ENCODE measurements at regions of chr20 and their contacts with region 1.

Region 1: DNA sequence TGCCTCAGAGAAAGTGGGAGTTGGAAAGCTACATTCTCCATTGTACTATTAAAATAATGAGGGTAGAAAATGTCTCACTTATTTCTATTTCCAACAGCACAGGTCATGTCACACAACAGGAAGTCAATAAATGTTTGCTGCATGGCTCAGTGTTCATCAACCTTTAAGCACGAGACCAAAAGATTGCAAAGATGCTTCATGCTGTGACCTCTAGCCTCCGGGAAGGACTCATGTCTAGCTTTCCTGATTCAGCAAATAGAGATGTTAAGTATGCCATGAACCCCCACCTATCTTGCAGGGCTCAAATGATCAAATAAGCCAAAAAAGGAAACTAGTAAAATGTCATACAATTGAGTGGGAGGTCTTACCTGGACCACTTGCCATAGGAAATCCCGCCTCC is 57.4 kb downstream of the NCOA6 start:
- DNase-seq: no peak
- H3K4me3 ChIP-seq: no peak overlapping the region
- H3K27ac ChIP-seq: no peak overlapping the region
- H3K4me1 ChIP-seq: no peaks in the 10 kb centered on the region
- H3K27me3 ChIP-seq: no peaks in the 10 kb centered on the region
- CTCF ChIP-seq: no peak
- EP300 ChIP-seq: no peak
- POLR2A ChIP-seq: no peak
- RAD21 ChIP-seq: no peak

Region 2: GRCh38 chr20:34673411-34673810 is 94.7 kb before region 1 on chr20:
- CTCF ChIA-PET with region 1: no interaction called
- POLR2A ChIA-PET with region 1: no interaction called
- DNase-seq: no peak
- H3K4me3 ChIP-seq: no peak overlapping the region
- H3K27ac ChIP-seq: no peak overlapping the region
- H3K4me1 ChIP-seq: no peaks in the 10 kb centered on the region
- H3K27me3 ChIP-seq: no peaks in the 10 kb centered on the region
- CTCF ChIP-seq: no peak
- EP300 ChIP-seq: no peak
- POLR2A ChIP-seq: no peak
- RAD21 ChIP-seq: no peak

Region 3: DNA sequence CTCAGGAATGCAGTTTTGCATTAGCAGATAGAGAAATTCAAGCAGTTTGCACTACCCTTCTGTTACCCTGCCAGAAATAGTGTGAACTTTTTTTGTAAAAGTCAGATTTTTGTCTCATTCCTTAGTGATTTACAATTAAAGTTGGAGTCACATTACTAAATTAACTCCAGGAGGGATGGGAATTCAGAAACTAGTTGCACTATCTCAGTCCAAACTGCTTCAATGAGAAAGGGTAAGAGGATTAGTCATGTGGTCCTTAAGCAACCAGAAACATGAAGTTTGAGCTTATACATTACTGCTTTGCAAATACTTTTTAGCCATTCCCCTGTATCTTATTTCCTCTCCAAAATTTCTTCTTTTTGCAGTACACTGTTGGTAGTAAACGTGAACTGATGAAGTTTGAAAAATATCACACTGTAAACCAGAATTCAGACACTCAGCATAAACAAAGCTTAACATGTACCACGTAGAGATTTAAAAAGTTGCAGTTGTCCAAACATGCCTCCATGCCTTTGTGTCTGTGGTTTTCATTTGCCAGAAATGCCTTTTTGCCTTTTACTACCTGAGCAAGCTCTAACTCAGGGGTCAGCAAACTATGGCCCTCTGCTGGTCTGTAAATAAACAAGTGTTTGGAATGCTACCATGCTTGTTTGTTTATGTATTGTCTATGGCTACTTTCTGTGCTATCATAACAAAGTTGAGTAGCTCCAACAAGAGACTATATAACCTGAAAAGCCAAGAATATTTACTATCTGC is 14.2 kb before region 1 on chr20:
- CTCF ChIA-PET with region 1: interaction called, 52 read pairs
- POLR2A ChIA-PET with region 1: interaction called, 3 read pairs
- DNase-seq: no peak
- H3K4me3 ChIP-seq: no peak overlapping the region
- H3K27ac ChIP-seq: no peak overlapping the region
- H3K4me1 ChIP-seq: no peaks in the 10 kb centered on the region
- H3K27me3 ChIP-seq: no peaks in the 10 kb centered on the region
- CTCF ChIP-seq: peak in 1 of 3 experiments; percentile 20; a peak in 1 of 4 replicates
- EP300 ChIP-seq: no peak
- POLR2A ChIP-seq: no peak
- RAD21 ChIP-seq: peak in 1 of 2 experiments; percentile 36; a peak in 1 of 4 replicates

Region 4: DNA sequence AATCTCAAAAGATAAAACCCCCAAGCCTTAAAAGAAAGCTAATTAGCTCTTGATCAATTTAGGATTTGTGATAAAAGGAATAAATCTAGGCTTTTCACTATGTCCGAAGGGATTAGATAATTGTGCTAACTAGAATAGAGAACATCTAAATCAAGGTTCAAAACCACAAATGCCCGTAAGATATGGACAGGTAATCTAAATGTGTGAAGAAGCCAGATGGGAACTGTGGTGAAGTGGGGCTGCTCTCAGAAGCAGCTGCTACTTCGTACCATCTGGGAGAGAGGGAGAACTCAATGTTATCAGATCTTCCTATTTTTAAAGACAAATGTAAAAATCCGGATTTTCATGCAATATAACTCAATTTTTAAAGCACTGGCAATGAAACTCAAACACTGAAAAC is 13.1 kb after region 1 on chr20:
- CTCF ChIA-PET with region 1: interaction called, 15 read pairs
- POLR2A ChIA-PET with region 1: no interaction called
- DNase-seq: no peak
- H3K4me3 ChIP-seq: no peak overlapping the region
- H3K27ac ChIP-seq: no peak overlapping the region
- H3K4me1 ChIP-seq: no peaks in the 10 kb centered on the region
- H3K27me3 ChIP-seq: no peaks in the 10 kb centered on the region
- CTCF ChIP-seq: no peak
- EP300 ChIP-seq: no peak
- POLR2A ChIP-seq: no peak
- RAD21 ChIP-seq: no peak

Region 5: GRCh38 chr20:34791289-34792020 is 23.4 kb after region 1 on chr20:
- CTCF ChIA-PET with region 1: interaction called, 10 read pairs
- POLR2A ChIA-PET with region 1: no interaction called
- DNase-seq: no peak
- H3K4me3 ChIP-seq: no peak overlapping the region
- H3K27ac ChIP-seq: no peak overlapping the region
- H3K4me1 ChIP-seq: peaks cover 0 to 3% (median 0%) of the 10 kb centered on the region in 4 experiments; a peak in 2 of 7 replicates
- H3K27me3 ChIP-seq: no peaks in the 10 kb centered on the region
- CTCF ChIP-seq: no peak
- EP300 ChIP-seq: no peak
- POLR2A ChIP-seq: no peak
- RAD21 ChIP-seq: no peak